ENCODE measurements at regions of chr7 and their contacts with region 1.

Region 1: GRCh38 chr7:99408379-99409191 is at the starts of genes BUD31 and PDAP1:
- DNase-seq: peak; percentile 95
- H3K4me3 Mint-ChIP-seq: peak within 1 kb of the TSS; percentile 86
- H3K27ac Mint-ChIP-seq: peak within 1 kb of the TSS; percentile 90
- H3K4me1 Mint-ChIP-seq: peaks cover 58% of the 10 kb centered on the region
- H3K27me3 Mint-ChIP-seq: no peaks in the 10 kb centered on the region
- total RNA-seq, gene BUD31: 104 to 106 TPM
- total RNA-seq, gene PDAP1: 93.8 to 103 TPM

Region 2: DNA sequence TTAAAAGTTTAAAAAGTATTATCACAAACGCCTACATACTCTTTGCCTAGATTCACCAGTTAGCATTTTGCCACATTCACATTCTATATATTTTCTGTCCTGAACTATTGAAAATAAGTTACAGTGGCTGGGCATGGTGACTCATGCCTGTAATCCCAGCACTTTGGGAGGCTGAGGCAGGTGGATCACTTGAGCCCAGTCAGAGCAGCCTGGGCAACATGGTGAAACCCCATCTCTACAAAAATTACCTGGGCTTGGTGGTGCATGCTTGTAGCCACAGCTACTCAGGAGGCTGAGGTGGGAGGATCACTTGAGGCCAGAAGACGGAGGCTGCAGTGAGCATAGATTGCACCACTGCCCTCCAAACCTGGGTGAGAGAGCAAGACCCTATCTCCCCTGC is 77.6 kb before region 1 on chr7:
- CTCF ChIA-PET with region 1: no interaction called
- POLR2A ChIA-PET with region 1: interaction called, 13 read pairs
- DNase-seq: no peak
- H3K4me3 Mint-ChIP-seq: no peak overlapping the region
- H3K27ac Mint-ChIP-seq: peak overlapping the region; percentile 93
- H3K4me1 Mint-ChIP-seq: peaks cover 60% of the 10 kb centered on the region
- H3K27me3 Mint-ChIP-seq: no peaks in the 10 kb centered on the region

Region 3: DNA sequence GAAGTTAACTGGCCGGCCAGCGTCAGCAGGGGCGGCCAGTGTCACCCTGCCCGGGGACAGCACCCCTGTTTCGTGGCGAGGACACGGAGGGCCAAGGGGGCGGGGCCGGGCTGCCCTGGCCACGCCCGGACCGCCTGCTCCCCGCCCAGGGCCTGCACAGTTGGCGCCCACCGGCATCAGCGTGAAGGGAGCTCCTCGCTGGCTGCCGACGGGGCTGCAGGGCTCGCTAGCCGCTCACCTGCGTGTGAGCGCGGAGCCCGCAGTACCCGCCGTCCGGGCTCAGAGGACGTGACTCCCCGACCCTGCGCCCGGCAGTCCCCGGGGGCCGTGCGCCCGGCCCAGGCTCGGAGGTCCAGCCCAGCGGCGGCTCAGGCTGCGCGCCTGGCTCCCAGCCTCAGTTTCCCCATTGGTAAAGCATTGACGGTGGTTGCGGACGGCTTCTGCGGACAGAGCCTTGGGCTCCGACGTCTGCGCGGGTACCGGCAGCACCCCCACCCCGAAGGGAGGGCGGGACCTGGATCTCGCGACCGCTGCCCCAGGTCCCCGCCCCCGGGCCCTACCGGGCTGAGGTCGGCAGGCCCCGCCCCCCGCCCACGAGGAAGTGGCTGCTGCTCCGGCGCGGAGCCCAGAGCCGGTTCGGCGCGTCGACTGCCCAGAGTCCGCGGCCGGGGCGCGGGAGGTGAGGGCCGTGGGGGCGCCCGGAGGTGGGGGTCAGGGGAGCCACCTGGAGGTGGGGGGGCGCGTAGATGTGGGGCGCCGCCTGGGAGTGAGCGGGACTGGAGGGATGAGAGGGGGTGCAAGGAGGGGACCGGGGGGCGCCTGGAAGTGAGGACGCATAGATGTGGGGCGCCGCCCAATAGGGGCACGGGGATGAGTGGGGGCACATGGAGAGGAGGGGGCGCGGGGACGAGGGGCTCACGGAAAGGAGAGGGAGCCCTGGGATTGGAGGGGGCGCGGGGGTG is 34.2 kb before region 1 on chr7 and contains the start of gene ARPC1B:
- CTCF ChIA-PET with region 1: no interaction called
- POLR2A ChIA-PET with region 1: interaction called, 93 read pairs
- DNase-seq: peak; percentile 87
- H3K4me3 Mint-ChIP-seq: peak within 1 kb of the TSS; percentile 80
- H3K27ac Mint-ChIP-seq: peak within 1 kb of the TSS; percentile 83
- H3K4me1 Mint-ChIP-seq: peaks cover 48% of the 10 kb centered on the region
- H3K27me3 Mint-ChIP-seq: no peaks in the 10 kb centered on the region
- total RNA-seq, gene ARPC1B: 396 to 397 TPM

Region 4: DNA sequence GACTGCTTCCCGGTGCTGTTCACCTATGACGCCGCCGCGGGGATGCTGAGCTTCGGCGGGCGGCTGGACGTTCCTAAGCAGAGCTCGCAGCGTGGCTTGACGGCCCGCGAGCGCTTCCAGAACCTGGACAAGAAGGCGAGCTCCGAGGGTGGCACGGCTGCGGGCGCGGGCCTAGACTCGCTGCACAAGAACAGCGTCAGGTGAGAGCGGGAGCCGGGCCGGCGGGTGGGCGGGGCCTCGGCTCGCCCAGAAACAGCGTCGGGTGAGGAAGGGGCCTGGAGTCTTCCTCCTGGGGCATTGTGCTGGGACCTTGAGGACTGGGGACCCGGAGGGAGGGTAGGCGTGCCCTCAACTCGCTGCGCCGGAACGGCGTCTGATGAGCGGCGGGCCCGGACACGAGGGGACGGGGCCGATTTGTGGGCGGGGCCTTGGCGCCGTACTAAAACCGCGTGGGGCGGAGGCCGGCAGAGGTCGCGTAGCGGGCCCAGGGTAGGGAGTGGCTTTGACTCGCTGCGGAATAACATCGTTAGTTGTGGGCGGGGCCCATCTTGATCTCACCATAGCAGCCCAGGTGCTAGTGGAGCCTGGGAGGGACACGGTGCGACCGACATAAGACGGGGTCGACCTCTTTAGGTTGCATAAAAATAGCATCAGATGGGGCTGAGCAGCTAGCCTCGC is 15.8 kb before region 1 on chr7:
- CTCF ChIA-PET with region 1: interaction called, 5 read pairs
- POLR2A ChIA-PET with region 1: interaction called, 160 read pairs
- DNase-seq: peak; percentile 85
- H3K4me3 Mint-ChIP-seq: peak overlapping the region; percentile 60
- H3K27ac Mint-ChIP-seq: peak overlapping the region; percentile 85
- H3K4me1 Mint-ChIP-seq: peaks cover 33% of the 10 kb centered on the region
- H3K27me3 Mint-ChIP-seq: no peaks in the 10 kb centered on the region

Region 5: GRCh38 chr7:99438573-99439480 is 30.2 kb after region 1 on chr7 and contains the starts of genes CPSF4 and PTCD1:
- CTCF ChIA-PET with region 1: interaction called, 4 read pairs
- POLR2A ChIA-PET with region 1: interaction called, 15 read pairs
- DNase-seq: peak; percentile 92
- H3K4me3 Mint-ChIP-seq: peak within 1 kb of the TSS; percentile 98
- H3K27ac Mint-ChIP-seq: peak within 1 kb of the TSS; percentile 86
- H3K4me1 Mint-ChIP-seq: peaks cover 45% of the 10 kb centered on the region
- H3K27me3 Mint-ChIP-seq: no peaks in the 10 kb centered on the region
- total RNA-seq, gene CPSF4: 64.1 to 66.2 TPM
- total RNA-seq, gene PTCD1: 6.6 to 7.5 TPM

Measured in activated CD4-positive, alpha-beta memory T cell treated with anti-CD3 and anti-CD28 coated beads, Interleukin-2, amount 10 ng/mL, durations not matched to agents 7 days and 5 days (primary cell).